Posterior vena cava (tissue), 2 donors: ENCODE measurements at regions of chr18 and their contacts with region 1.

Region 1: GRCh38 chr18:48545757-48546321 is 7.0 kb downstream of the CTIF start:
- DNase-seq: peak; percentile 91

Region 2: GRCh38 chr18:48074929-48075706 is 470.7 kb before region 1 on chr18:
- intact Hi-C with region 1: no loop called
- DNase-seq: peak; percentile 8

Region 3: GRCh38 chr18:48404716-48405507 is 140.9 kb before region 1 on chr18:
- intact Hi-C with region 1: no loop called
- DNase-seq: no peak

Region 4: GRCh38 chr18:48590678-48591077 is 44.8 kb after region 1 on chr18:
- intact Hi-C with region 1: loop called in 1 of 2 experiments (anchors 5 kb)
- DNase-seq: no peak